ENCODE measurements at regions of chr7 and their contacts with region 1.

Region 1: DNA sequence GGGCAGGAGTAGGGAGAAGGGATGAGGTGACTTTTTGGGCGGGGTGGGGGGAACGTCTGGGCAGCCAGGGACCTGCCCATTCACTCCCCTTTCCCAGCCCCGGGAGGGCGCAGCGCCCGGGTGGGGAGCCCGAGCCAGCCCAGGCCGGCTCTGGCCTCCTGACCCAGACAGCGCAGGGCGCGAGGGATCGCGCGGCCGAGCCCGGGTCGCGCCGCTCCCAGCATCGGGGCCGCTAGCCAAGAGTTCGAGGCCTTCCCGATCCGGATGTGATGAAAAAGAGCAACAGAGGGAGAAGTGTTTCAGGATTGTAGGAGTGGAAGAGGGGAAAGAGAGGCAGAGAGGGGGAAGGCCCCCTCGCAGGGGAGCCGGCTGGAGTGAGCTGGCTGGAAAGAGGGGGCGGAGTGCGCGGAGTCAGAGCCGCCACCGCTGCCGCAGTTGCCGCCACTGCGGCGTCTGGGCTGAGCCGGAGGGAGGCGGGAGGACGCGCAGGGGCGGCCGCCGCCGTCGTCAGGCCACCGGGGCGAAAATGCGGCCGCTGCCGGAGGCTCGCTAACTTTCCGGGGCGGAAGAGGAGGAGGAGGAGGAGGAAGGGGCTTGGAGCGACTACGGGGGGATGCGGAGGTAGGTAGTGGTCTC is at the start of gene MDFIC:
- DNase-seq: peak; percentile 84
- total RNA-seq, gene MDFIC: 49.8 TPM

Region 2: DNA sequence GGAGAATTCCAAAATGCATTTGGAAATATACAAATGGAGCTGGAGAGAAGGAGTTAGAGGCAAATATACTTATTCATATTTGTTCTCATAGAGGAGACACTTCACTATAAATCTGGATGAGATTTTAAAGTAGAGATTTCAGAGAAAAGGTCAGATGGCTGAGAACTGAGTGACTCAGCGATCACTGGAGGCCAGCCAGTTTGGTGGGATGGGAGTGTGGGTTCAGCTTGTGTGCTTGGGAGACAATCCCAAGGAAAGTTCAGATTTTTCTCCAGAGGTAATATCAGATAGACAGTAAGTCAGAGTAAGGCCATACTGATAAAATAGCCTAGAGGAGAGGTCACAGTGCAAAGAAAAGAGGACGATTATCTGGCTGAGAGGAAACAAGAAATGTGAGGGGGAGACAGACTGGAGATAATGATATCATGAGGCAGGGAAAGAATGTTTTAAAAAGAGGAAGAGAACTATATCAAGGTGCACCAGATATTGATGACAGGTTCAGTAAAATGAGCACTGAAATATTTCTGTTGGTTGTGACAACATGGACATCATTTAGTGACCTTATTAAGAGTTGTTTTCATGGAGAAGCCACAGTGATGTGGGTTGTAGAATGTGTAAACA is 66.7 kb after region 1 on chr7:
- intact Hi-C with region 1: loop called (anchors 5 kb)
- DNase-seq: peak; percentile 81

Region 3: GRCh38 chr7:115087437-115087836 is 165.3 kb after region 1 on chr7:
- intact Hi-C with region 1: loop called (anchors 10 kb)
- DNase-seq: no peak

Region 4: DNA sequence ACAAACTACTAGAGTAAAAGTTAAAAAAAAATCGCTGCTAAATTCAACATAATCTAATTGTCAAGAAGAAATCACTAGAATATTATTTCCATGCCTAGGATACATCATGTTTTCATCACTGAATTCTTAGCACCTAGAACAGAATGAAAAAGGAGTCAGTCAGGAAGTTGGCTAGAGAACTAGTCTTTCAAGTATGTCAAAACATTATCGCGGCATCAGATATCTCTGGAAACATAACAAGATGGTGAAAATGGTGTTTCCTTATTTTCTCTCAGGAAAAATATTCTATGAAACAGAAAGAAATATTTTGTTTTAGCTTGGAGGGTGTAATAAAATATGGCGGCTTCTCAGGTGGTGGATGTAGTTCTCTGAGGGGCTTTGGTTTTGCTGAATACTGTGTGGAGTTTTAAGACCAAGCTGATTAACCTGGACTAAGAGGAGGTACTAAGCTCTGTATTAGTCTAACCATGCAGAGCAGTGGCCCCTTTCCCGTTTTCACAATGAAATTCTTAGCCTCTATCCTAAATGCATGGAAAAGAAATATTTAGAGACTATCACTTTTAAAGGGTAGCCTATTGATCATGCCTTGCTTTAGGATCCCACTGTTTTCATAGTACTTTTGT is 205.4 kb after region 1 on chr7:
- intact Hi-C with region 1: loop called (anchors 5 kb)
- DNase-seq: no peak

Region 5: GRCh38 chr7:115178835-115179234 is 256.7 kb after region 1 on chr7:
- intact Hi-C with region 1: no loop called
- DNase-seq: no peak

Measured in cardiac septum (tissue), 1 donor.